ENCODE measurements at regions of chr9 and their contacts with region 1.

Region 1: GRCh38 chr9:129473523-129474229 is 147.2 kb downstream of the C9orf50 start:
- DNase-seq: no peak
- ATAC-seq: no peak
- H3K4me3 ChIP-seq: no peak overlapping the region
- H3K27ac ChIP-seq: no peak overlapping the region
- H3K4me1 ChIP-seq: peaks cover 78% of the 10 kb centered on the region
- H3K27me3 ChIP-seq: 0 out of 5 replicates have a peak, but pooled peaks cover 0 to 4% of the 10 kb centered on the region in 2 experiments
- CTCF ChIP-seq: no peak
- EP300 ChIP-seq: no peak
- POLR2A ChIP-seq: no peak
- RAD21 ChIP-seq: no peak

Region 2: GRCh38 chr9:129307227-129307970 is 166.3 kb before region 1 on chr9:
- CTCF ChIA-PET with region 1: no interaction called
- POLR2A ChIA-PET with region 1: no interaction called
- in situ Hi-C with region 1: no loop called
- intact Hi-C with region 1: no loop called
- DNase-seq: peak; percentile 30
- ATAC-seq: no peak
- H3K4me3 ChIP-seq: no peak overlapping the region
- H3K27ac ChIP-seq: no peak overlapping the region
- H3K4me1 ChIP-seq: peaks cover 21% of the 10 kb centered on the region
- H3K27me3 ChIP-seq: peaks cover 2 to 23% of the 10 kb centered on the region in 2 experiments; a peak in 4 of 5 replicates
- CTCF ChIP-seq: no peak
- EP300 ChIP-seq: no peak
- POLR2A ChIP-seq: no peak
- RAD21 ChIP-seq: no peak

Region 3: GRCh38 chr9:129320575-129321263 is 153.0 kb before region 1 on chr9:
- CTCF ChIA-PET with region 1: no interaction called
- POLR2A ChIA-PET with region 1: no interaction called
- in situ Hi-C with region 1: no loop called
- intact Hi-C with region 1: no loop called
- DNase-seq: peak; percentile 63
- ATAC-seq: no peak
- H3K4me3 ChIP-seq: peak overlapping the region in 1 of 3 experiments; percentile 44; a peak in 1 of 6 replicates
- H3K27ac ChIP-seq: no peak overlapping the region
- H3K4me1 ChIP-seq: peaks cover 100% of the 10 kb centered on the region
- H3K27me3 ChIP-seq: no peaks in the 10 kb centered on the region
- CTCF ChIP-seq: no peak
- EP300 ChIP-seq: no peak
- POLR2A ChIP-seq: no peak
- RAD21 ChIP-seq: no peak

Region 4: GRCh38 chr9:129352146-129352865 is 121.4 kb before region 1 on chr9:
- CTCF ChIA-PET with region 1: no interaction called
- POLR2A ChIA-PET with region 1: no interaction called
- in situ Hi-C with region 1: no loop called
- intact Hi-C with region 1: no loop called
- DNase-seq: no peak
- ATAC-seq: no peak
- H3K4me3 ChIP-seq: peak overlapping the region in 1 of 3 experiments; percentile 41; a peak in 1 of 6 replicates
- H3K27ac ChIP-seq: no peak overlapping the region
- H3K4me1 ChIP-seq: peaks cover 36% of the 10 kb centered on the region
- H3K27me3 ChIP-seq: peaks cover 6 to 13% of the 10 kb centered on the region in 2 experiments; a peak in 2 of 5 replicates
- CTCF ChIP-seq: no peak
- EP300 ChIP-seq: no peak
- POLR2A ChIP-seq: no peak
- RAD21 ChIP-seq: no peak

Region 5: DNA sequence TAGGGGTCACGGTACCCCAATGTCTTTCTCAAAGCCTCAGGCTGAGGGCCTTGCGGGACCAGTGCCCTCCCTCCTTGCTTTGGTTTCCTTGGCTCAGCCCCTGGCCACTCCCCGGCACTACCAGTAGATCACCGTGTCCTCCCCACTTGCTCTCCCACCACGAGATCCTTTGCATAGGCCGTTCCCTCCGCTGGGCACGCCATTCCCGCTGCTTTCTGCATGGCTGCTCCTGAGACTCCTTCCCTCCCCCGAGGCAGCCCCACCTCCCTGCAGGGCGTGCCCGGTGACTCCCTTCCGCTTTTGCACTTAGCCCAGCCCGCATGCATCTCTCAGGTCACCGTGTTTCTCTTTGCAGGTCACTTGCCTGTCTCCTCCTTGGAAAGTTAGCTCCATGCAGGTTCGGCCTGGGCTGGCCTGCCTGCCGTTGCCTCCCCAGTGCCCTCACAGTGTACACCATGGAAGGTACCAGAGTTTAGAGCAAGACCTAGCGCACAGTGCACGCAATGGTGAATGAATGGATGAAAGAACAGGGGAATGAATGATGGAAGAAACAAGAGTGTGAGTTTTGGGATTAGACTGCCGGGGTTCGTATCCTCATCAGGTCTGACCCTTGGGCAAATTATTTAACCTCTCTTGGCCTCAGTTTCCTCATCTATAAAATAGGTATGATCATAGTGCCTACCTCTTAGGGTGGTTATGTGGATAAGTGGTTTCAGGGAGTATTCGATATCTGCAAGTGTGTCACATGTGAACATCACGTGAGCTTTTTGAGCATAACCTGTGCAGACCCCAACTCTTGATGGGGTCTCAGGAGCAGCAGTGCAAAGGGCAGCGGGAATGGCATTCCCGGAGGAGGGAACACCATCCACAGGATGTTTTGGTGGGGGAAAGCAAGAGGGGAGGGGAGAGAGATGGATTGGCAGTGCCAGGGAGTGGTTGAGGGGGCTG is 67.1 kb before region 1 on chr9:
- CTCF ChIA-PET with region 1: no interaction called
- POLR2A ChIA-PET with region 1: no interaction called
- in situ Hi-C with region 1: no loop called
- intact Hi-C with region 1: loop called (anchors 5 kb)
- DNase-seq: no peak
- ATAC-seq: no peak
- H3K4me3 ChIP-seq: no peak overlapping the region; a peak in 1 of 6 replicates
- H3K27ac ChIP-seq: no peak overlapping the region
- H3K4me1 ChIP-seq: peaks cover 70% of the 10 kb centered on the region
- H3K27me3 ChIP-seq: peaks cover 5 to 34% of the 10 kb centered on the region in 2 experiments; a peak in 3 of 5 replicates
- CTCF ChIP-seq: no peak
- EP300 ChIP-seq: no peak
- POLR2A ChIP-seq: no peak
- RAD21 ChIP-seq: no peak

Region 6: GRCh38 chr9:129536041-129536440 is 62.4 kb after region 1 on chr9:
- CTCF ChIA-PET with region 1: no interaction called
- POLR2A ChIA-PET with region 1: no interaction called
- in situ Hi-C with region 1: no loop called
- intact Hi-C with region 1: no loop called
- DNase-seq: no peak
- ATAC-seq: no peak; the same call in 2 of the 3 replicates
- H3K4me3 ChIP-seq: no peak overlapping the region
- H3K27ac ChIP-seq: no peak overlapping the region
- H3K4me1 ChIP-seq: no peaks in the 10 kb centered on the region
- H3K27me3 ChIP-seq: no peaks in the 10 kb centered on the region
- CTCF ChIP-seq: no peak
- EP300 ChIP-seq: no peak
- POLR2A ChIP-seq: no peak
- RAD21 ChIP-seq: no peak